ENCODE measurements at regions of chr6 and their contacts with region 1.

Region 1: GRCh38 chr6:109308018-109308492 is 74.2 kb downstream of the CD164 start:
- DNase-seq: peak; percentile 80 to 92
- H3K4me3 ChIP-seq: no peak overlapping the region
- H3K27ac ChIP-seq: peak overlapping the region; percentile 16 to 73
- H3K4me1 ChIP-seq: peaks cover 0 to 16% of the 10 kb centered on the region in 2 donors
- H3K27me3 ChIP-seq: no peaks in the 10 kb centered on the region
- CTCF ChIP-seq: no peak

Region 2: DNA sequence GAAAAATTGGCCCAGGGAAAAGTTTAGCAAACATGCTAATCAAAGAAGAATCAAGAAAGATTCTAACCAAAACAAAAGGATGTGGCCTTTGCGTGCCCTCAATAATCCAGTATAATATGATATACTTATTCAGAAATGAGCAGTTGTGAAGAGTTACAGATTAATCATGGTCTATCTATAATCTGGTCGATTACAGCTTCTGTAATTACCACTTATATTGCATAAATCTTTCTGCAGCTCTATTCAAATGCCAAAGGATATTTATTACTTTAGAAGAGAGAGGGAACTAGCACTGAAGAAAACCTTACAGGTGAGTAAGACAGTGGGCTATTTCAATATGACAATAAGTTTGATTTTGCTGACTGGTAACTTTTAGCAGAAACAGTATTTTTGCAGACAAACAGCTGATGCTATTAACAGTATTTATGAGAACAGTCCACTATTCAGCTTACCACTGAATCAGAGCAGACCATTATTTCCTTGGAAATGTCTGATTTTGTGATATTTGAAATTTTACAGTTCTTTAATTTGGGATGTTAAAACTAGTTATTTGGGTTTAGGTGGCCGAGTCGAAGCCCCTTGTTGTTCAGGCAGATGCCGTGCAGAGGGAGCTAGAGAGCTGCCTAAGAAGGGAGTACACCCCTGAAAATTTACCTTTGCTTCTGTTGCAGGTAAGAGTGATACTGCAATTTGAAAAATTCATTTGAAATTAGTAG is 120.5 kb before region 1 on chr6:
- intact Hi-C with region 1: loop called (anchors 5 kb)
- DNase-seq: peak in 1 of 2 donors; percentile 73
- H3K4me3 ChIP-seq: no peak overlapping the region
- H3K27ac ChIP-seq: no peak overlapping the region
- H3K4me1 ChIP-seq: no peaks in the 10 kb centered on the region
- H3K27me3 ChIP-seq: no peaks in the 10 kb centered on the region
- CTCF ChIP-seq: peak; percentile 86 to 98 (median 96)

Region 3: DNA sequence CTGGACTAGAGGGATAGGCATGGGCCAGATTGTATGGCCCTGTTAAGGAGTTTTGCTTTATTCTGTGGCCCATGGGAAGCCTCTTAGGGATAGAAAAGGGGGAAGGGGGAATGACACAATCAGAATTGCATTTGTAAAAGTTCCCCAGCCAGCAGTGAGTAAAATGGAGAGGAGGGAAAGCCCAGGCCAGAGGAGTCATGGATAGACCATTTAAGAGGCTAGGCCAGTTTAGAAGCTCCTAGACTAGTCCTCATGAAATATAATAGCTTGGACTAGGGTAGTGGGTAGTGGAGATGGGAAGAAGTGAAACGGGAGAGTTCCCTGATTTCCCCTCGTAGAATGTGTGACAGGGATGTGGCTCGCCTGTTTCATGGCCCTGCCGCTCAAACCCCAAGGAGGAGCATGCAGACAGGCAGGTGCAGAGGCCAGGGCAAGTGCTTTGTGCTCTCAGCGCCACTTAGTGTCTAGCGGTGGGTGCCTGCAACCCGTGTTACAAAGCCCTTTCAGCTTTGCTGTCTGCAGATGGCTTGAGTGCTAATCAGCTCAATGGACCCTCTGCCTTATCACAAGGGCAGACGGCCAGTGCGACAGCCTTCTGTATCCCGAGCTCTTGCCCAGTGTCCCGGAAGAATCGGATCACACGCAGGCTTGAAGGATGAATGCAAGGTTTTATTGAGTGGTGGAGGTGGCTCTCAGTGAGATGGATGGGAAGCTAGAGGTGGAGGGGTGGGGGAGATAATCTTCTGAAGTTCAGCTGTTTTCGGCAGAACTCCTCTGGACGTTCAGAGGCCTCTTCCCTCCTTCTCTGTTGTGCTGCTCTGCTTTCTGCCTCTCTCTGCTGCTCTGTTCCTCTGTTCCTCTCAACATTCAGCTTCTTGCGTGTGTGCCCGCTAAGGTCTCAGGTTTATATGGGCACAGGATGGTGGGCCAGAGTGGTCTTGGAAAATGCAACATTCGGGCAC is 71.7 kb before region 1 on chr6:
- intact Hi-C with region 1: loop called (anchors 5 kb)
- DNase-seq: no peak
- H3K4me3 ChIP-seq: no peak overlapping the region
- H3K27ac ChIP-seq: no peak overlapping the region
- H3K4me1 ChIP-seq: peaks cover 4 to 7% of the 10 kb centered on the region in 2 donors
- H3K27me3 ChIP-seq: no peaks in the 10 kb centered on the region
- CTCF ChIP-seq: no peak

Region 4: DNA sequence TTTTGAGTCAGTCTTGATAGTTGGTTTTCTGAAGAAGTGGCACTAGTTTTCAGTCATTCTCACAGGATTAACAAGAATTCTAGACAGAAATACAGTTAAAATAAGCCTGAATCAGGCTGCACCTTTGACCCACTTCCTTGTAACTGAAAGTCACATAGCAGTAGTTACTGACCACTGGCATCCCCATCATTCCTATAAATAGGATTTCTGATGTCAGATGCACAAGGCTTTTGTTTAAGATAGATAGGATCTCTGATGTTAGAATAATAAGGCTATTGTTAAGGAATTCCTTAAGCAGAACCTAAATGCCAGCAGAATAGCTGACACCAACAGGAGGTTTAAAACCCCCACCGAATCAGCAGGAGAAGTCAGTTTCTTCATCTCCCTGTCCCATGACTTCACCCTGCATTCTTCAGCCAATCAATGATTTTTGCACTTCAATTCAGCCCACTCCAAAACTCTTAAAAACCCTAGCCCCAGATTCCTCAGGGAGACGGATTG is 205.6 kb after region 1 on chr6:
- intact Hi-C with region 1: no loop called
- DNase-seq: no peak
- H3K4me3 ChIP-seq: no peak overlapping the region
- H3K27ac ChIP-seq: no peak overlapping the region
- H3K4me1 ChIP-seq: no peaks in the 10 kb centered on the region
- H3K27me3 ChIP-seq: no peaks in the 10 kb centered on the region
- CTCF ChIP-seq: no peak

Region 5: DNA sequence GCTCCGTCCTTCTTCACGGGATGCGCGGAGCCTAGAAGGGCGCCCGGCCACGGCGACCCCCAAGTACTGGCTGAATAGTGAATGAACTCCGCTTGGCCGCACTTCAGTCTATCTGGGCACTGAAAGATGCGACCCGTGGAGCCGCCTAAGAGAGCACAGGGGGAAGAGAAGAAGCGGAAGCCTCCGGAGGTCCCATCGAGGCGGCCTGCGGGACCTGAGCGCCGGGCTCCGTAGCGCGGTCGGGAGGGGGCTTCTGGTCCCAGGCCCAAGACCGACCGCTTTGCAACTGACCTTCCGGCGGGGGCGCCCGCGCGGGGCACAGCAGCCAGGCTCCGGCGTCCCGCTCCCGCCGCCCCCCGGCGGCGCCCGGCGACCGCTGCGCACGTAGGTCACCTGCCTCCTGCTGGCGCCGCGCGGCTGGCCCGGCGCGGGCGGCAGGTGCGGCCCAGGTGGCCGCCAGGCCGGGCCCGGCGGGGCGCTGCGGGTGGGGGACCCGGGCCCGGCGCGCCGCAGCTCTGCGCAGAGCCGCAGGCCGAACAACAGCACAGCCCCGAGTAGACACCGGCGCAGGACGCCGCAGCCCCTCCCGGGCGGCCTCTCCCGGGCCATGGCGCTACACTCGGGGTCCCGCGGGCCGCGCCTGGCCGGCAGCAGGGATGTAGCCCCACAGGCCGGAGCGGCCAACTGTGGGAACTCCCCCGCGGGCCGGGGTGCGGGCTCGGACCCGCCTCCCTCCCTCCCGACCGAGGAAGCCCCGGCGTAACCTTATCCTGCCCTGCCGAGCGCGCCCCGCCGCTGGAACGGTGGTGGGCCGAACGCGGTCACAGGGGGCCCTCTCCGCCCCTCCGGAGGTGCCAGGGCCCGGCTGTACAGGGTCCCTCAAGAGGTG is 1049.9 kb after region 1 on chr6 and contains the start of gene METTL24:
- intact Hi-C with region 1: loop called (anchors 10 kb)
- DNase-seq: no peak
- H3K4me3 ChIP-seq: peak within 1 kb of the TSS; percentile 72 to 91
- H3K27ac ChIP-seq: peak within 1 kb of the TSS; percentile 95 to 96
- H3K4me1 ChIP-seq: peaks cover 6 to 21% of the 10 kb centered on the region in 2 donors
- H3K27me3 ChIP-seq: no peaks in the 10 kb centered on the region
- CTCF ChIP-seq: no peak
- total RNA-seq, gene METTL24: 2.0 TPM

Measured in ascending aorta (tissue), 2 donors.